ENCODE measurements at regions of chr2 and their contacts with region 1.

Region 1: DNA sequence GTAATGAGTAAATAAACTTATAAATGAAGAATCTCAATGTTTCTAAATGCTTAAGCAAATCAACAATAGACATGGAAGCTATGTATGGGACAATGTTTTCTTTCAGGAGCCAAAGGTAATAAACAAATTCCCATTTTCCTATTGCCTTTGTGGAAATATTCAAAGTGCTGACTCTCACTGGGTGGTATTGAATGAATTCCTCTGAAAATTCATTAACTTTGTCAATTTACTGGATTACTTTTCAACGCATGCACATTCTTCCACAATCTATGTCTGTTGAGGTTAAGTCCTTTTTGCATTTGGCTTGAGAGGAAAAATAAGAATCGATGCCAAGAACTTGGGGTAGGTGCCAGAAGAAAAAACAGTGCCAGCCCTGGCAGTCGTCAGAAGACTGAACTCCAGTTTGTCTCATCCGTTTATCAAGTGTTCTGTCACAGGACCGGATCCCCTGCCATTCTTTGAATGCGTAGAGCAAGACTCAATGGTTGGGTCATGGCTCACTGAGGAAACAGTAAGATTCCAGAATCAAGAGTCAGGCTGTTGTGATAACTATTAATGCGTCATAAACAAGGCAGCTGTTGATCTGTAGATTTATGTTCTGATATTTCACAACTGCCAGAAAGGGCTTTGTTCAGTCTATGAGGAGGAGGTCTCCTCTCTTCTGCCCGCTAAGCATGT is 133.3 kb downstream of the GFPT1 start:
- DNase-seq: peak; percentile 97
- H3K4me3 ChIP-seq: no peak overlapping the region
- H3K27ac ChIP-seq: peak overlapping the region; percentile 96
- H3K4me1 ChIP-seq: peaks cover 30% of the 10 kb centered on the region
- H3K27me3 ChIP-seq: no peaks in the 10 kb centered on the region
- CTCF ChIP-seq: no peak
- POLR2A ChIP-seq: peak; percentile 84

Region 2: GRCh38 chr2:69046221-69046662 is 207.5 kb before region 1 on chr2:
- CTCF ChIA-PET with region 1: no interaction called
- POLR2A ChIA-PET with region 1: no interaction called
- dilution Hi-C with region 1: no loop called
- intact Hi-C with region 1: loop called (anchors 1 kb)
- DNase-seq: peak; percentile 88
- H3K4me3 ChIP-seq: no peak overlapping the region
- H3K27ac ChIP-seq: peak overlapping the region; percentile 77
- H3K4me1 ChIP-seq: peaks cover 20% of the 10 kb centered on the region
- H3K27me3 ChIP-seq: no peaks in the 10 kb centered on the region
- CTCF ChIP-seq: no peak
- POLR2A ChIP-seq: no peak

Region 3: DNA sequence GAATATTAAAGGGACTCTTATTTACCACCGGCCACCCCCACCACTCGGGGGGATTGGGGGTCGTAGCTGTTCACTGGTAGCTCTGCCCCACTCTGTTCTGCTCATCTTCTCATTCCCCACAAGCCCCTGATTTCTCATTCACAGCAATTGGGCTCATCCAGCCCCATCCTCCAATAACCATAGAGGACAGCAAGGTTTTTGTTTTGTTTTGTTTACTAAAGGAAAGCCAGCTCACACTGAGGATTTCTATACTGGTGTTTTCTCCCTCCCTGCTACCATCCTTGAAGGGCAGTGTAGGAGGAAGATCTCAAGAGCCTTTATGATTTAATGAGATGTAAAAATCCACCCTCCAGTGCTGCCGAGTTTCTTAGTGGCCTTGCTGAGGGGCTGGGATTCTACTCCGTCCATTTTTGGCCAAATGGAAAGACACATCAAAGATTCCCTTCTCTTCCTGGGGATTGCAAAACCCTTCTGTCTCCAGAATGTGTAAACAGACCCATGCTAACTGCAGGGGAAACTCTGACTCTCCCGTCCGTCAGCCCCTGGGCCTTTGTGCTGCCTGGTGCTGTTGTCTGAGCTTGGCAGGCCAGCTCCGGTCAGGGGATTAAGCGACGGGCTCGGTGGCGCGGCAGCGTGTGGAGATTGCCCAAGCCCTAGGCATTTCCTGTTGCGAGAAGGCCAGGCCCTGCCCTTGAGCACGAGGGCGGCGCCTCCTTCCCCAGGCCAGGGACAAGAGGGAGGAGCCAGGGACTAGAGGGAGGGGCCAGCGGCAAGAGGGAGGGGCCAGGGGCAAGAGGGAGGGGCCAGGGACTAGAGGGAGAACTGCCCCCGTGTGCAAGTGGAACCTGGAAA is 75.7 kb before region 1 on chr2:
- CTCF ChIA-PET with region 1: no interaction called
- POLR2A ChIA-PET with region 1: no interaction called
- dilution Hi-C with region 1: no loop called
- intact Hi-C with region 1: loop called (anchors 1 kb)
- DNase-seq: peak; percentile 74
- H3K4me3 ChIP-seq: peak overlapping the region in 1 of 3 experiments; percentile 0
- H3K27ac ChIP-seq: peak overlapping the region; percentile 91
- H3K4me1 ChIP-seq: peaks cover 14% of the 10 kb centered on the region
- H3K27me3 ChIP-seq: no peaks in the 10 kb centered on the region
- CTCF ChIP-seq: no peak
- POLR2A ChIP-seq: no peak

Region 4: DNA sequence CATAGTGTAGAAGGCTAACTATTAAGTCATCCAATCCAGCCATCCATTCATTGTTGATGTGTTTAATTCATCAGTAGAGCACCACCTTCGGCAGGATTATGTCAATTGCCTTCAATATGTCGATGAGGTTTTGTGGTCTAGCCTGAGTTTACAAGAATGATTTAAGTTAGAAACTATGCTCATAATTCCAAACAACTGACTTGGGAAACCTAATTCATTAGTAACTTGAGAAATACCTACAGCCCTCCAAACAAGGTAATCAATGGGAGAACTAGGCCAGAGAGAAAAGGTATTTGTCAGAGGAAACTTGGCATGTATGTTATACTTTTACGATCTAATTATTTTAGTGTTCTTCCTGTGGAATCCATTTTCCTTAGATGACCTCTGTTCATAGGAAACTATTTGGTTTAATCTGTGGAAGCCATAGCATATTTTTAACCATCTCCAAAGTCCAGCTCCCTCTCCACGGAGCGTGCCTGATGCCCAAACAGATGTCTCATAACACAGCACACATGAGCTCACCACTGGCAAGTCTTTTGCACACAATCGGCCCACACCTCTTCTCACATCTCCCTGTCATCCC is 15.2 kb before region 1 on chr2:
- CTCF ChIA-PET with region 1: interaction called, 3 read pairs
- POLR2A ChIA-PET with region 1: no interaction called
- dilution Hi-C with region 1: no loop called
- intact Hi-C with region 1: loop called (anchors 2 kb)
- DNase-seq: no peak
- H3K4me3 ChIP-seq: no peak overlapping the region
- H3K27ac ChIP-seq: no peak overlapping the region
- H3K4me1 ChIP-seq: no peaks in the 10 kb centered on the region
- H3K27me3 ChIP-seq: no peaks in the 10 kb centered on the region
- CTCF ChIP-seq: no peak
- POLR2A ChIP-seq: no peak

Region 5: GRCh38 chr2:69298261-69298660 is 44.5 kb after region 1 on chr2:
- CTCF ChIA-PET with region 1: interaction called, 5 read pairs
- POLR2A ChIA-PET with region 1: no interaction called
- dilution Hi-C with region 1: no loop called
- intact Hi-C with region 1: loop called (anchors 1 kb)
- DNase-seq: peak; percentile 58
- H3K4me3 ChIP-seq: no peak overlapping the region
- H3K27ac ChIP-seq: peak overlapping the region; percentile 61
- H3K4me1 ChIP-seq: peaks cover 30% of the 10 kb centered on the region
- H3K27me3 ChIP-seq: no peaks in the 10 kb centered on the region
- CTCF ChIP-seq: no peak
- POLR2A ChIP-seq: no peak

Region 6: DNA sequence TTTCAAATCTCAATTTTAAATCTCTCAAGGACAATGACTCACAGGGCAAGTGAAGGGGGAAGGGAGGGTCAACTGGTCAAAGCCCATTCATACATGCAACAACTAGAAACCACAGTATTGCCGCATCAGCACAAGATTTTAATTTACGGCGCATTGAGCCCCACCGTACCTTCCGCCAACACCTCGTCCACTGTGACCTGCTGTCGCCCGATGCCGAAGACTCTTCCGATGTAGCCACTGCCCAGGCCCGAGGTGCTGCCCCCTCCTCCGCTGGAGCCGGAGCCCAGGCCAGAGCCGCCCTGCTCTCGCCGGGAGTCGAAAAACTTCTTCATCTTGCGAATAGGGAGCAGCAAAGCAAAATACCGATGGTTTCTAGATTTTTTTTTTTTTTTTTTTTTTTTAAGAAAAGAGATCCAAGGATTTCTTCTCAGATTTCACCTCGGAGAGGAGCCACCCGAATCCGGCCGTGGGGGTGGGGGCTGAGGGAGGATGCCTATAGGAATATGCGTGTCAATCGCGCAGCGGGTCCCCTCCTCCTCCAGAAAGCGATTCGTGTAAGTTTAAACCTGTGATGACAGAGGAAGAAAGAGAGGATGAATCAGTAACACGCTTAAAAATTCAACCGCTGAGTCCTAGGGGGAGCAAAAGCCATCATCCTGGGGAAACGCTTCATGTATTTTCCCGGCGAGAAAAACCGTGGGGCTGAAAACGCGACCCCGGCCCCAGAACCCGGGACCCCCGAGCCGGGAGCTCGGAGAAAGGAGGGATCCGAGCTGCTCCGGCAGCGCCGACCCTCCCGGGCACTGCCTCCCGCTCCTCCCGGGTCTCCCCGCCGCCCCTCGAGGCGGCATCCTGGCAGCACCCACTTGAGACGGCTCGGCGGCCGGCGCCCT is 389.2 kb after region 1 on chr2:
- CTCF ChIA-PET with region 1: no interaction called
- POLR2A ChIA-PET with region 1: no interaction called
- dilution Hi-C with region 1: no loop called
- intact Hi-C with region 1: no loop called
- DNase-seq: peak; percentile 82
- H3K4me3 ChIP-seq: peak overlapping the region; percentile 86 to 97 (median 89)
- H3K27ac ChIP-seq: peak overlapping the region; percentile 88
- H3K4me1 ChIP-seq: peaks cover 35% of the 10 kb centered on the region
- H3K27me3 ChIP-seq: no peaks in the 10 kb centered on the region
- CTCF ChIP-seq: no peak
- POLR2A ChIP-seq: no peak